WTC11 (cell line): ENCODE measurements at regions of chr1 and their contacts with region 1.

Region 1: DNA sequence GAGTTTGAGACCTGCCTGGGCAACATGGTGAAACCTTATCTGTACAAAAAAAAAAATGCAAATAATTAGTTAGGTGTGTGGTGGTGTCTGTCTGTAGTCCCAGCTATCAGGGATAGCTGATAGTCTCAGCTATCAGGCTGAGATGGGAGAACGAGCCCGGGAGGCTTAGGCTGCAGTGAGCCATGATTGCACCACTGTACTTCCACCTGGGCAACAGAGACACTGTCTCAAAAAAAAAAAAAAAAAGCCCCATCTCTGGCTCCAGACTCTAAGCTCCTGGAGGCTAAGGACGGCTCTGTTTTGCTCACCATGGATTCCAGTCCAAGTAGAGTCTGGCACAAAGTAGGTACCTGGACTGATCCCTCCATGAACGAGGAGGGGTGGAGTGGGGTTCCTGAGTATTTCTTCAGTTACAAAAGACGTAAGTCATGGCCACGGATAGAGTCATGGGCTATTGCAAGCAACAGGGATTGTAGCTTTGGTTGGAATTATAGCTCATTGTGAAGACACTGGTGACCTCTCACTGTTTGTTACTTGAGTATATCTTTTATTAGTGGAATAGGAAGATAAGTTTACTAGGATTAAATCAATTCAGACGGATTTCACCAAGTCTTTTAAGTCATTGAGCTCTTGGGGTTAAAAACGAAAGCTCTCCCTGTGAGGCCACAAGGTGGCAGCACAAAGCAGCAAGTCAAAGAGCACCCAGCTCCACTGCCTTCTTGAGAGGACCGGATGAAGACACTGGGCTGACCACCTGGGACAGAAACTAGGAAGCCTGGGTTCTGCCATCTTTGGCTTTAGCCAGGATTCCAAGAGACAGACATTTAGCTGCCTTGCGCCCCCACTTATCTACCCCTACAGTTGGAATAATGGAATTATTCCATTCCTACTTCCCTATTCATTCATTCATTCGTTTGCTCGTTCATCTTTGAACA is 35.6 kb upstream of the TMEM61 start:
- DNase-seq: peak; percentile 77
- ATAC-seq: peak; percentile 90
- H3K4me3 Mint-ChIP-seq: no peak overlapping the region
- H3K27ac Mint-ChIP-seq: no peak overlapping the region
- H3K4me1 Mint-ChIP-seq: peaks cover 5% of the 10 kb centered on the region
- H3K27me3 Mint-ChIP-seq: peaks cover 8% of the 10 kb centered on the region
- CTCF ChIP-seq: peak; percentile 80

Region 2: GRCh38 chr1:54886724-54887664 is 57.9 kb before region 1 on chr1 and contains the start of gene DHCR24:
- CTCF ChIA-PET with region 1: interaction called, 41 read pairs
- POLR2A ChIA-PET with region 1: interaction called, 3 read pairs
- DNase-seq: peak; percentile 86
- ATAC-seq: peak; percentile 91
- H3K4me3 Mint-ChIP-seq: peak within 1 kb of the TSS; percentile 95
- H3K27ac Mint-ChIP-seq: peak within 1 kb of the TSS; percentile 93
- H3K4me1 Mint-ChIP-seq: peaks cover 47% of the 10 kb centered on the region
- H3K27me3 Mint-ChIP-seq: no peaks in the 10 kb centered on the region
- CTCF ChIP-seq: no peak
- total RNA-seq, gene DHCR24: 300 to 337 TPM (median 336 TPM) in 3 replicates

Region 3: DNA sequence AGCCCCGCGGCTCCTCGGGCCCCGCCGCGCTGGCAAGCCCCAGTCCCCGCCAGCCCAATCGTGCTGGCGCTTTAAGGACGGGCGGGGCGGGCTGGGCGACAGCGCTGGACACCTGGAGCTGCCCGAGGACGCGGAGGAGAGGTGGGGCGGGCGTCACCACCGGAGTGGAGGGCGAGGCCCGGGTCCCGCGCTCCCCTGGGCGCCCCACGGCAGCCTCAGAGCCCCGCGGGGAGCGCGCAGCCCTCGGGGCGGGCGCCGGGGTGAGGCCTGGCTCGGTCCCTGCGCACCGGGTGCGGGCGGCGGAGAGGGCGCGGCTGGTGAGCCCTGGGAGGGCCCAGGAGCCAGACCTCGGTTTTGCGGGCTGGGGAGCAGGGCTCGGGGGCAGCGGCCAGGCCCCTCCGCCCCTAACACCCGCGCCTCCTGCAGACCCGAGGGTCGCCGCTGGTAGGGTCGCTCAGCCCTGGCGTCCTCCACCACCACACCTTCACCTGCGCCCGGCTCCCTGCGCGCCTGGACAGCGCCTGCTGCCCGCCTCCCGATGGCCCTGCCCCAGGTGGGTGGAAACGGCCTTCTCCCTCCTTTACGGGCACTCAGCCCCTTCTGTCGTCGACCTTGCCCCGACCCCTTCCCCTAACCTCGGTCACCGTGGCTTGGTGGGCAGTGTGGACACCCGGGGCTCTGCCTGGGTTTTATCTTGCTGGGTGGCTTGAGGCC is 35.8 kb after region 1 on chr1 and contains the start of gene TMEM61:
- CTCF ChIA-PET with region 1: interaction called, 22 read pairs
- POLR2A ChIA-PET with region 1: no interaction called
- DNase-seq: peak; percentile 38
- ATAC-seq: peak; percentile 63
- H3K4me3 Mint-ChIP-seq: peak within 1 kb of the TSS; percentile 65
- H3K27ac Mint-ChIP-seq: no peak within 1 kb of the TSS
- H3K4me1 Mint-ChIP-seq: peaks cover 24% of the 10 kb centered on the region
- H3K27me3 Mint-ChIP-seq: peaks cover 31% of the 10 kb centered on the region
- CTCF ChIP-seq: no peak
- total RNA-seq, gene TMEM61: 0.41 to 0.74 TPM (median 0.44 TPM) in 3 replicates

Region 4: DNA sequence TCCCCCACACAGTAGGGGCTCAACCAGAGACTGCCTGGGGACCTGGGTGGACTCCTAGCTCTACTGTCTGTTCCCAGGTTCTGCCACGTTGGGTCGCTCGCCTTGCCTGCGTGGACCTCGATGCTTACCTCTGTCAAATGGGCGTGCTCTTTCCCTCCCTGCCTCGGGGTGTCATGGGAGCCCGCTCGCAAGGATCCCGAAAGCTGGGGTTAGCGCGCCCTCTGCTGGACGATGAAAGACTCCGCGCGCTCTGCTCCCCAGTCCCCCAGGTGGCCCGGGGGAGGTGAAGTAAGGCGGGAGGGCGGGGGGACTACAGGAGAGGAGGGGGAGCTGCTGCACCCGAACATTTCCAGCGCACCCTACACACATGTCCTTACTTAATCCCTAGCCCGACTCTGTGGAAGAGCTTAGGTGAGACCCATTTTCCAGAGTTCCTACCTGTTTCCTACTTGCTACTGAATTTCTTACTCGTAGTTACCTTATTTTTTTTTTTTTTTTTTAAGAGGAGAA is 51.5 kb after region 1 on chr1:
- CTCF ChIA-PET with region 1: interaction called, 373 read pairs
- POLR2A ChIA-PET with region 1: interaction called, 3 read pairs
- DNase-seq: peak; percentile 91
- ATAC-seq: peak; percentile 57
- H3K4me3 Mint-ChIP-seq: peak overlapping the region; percentile 63
- H3K27ac Mint-ChIP-seq: no peak overlapping the region
- H3K4me1 Mint-ChIP-seq: peaks cover 42% of the 10 kb centered on the region
- H3K27me3 Mint-ChIP-seq: peaks cover 57% of the 10 kb centered on the region
- CTCF ChIP-seq: peak; percentile 86

Region 5: GRCh38 chr1:55039342-55040082 is 94.6 kb after region 1 on chr1 and contains the start of gene PCSK9:
- CTCF ChIA-PET with region 1: interaction called, 19 read pairs
- POLR2A ChIA-PET with region 1: no interaction called
- DNase-seq: peak; percentile 71
- ATAC-seq: peak; percentile 68
- H3K4me3 Mint-ChIP-seq: peak within 1 kb of the TSS; percentile 86
- H3K27ac Mint-ChIP-seq: peak within 1 kb of the TSS; percentile 34; the same call in 1 of the 2 replicates
- H3K4me1 Mint-ChIP-seq: peaks cover 52% of the 10 kb centered on the region
- H3K27me3 Mint-ChIP-seq: peaks cover 52% of the 10 kb centered on the region
- CTCF ChIP-seq: no peak
- total RNA-seq, gene PCSK9: 47.9 to 73.2 TPM (median 49.3 TPM) in 3 replicates